ENCODE measurements at regions of chr2 and their contacts with region 1.

Region 1: DNA sequence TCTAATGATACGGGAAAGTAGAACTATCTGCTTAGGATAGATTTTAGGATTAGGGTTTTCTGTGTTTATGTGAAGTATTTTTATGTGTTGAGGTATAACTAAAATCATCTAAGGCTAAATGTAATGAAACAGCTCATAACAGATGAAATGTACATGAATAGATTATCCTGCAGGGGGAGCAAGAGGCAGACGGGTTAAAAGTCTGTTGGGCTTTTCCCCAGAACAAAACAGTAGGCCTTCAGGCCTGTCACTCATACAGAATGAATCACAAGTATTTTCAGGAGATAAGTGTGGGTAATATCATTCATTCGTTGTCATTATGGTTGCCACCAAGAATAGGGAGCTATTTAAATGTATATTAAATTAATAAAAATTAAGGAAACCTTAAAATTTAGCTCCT is 107.9 kb upstream of the IL1R2 start:
- DNase-seq: peak; percentile 76
- H3K4me3 Mint-ChIP-seq: no peak overlapping the region
- H3K27ac Mint-ChIP-seq: no peak overlapping the region
- H3K4me1 Mint-ChIP-seq: no peaks in the 10 kb centered on the region
- H3K27me3 Mint-ChIP-seq: no peaks in the 10 kb centered on the region
- CTCF ChIP-seq: peak; percentile 42

Region 2: DNA sequence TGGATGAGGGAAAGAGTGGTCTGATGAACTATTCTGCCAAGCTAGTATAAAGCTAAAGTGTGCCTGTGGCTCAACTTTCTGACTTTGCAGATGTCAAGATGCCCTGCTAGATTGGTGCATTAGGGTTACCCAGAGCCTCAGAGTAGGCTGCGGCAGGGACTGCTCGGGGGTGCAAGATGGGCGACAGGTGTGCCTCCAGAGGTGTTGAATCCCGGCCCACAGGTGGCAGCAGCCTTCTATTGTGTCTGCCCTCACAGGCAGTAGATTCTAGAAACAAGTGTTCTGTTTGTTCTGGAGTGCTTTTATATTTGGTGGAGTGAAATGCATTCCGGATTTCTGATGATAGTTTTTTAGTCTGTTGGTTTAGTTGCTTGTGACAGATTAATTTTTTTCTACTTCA is 23.7 kb before region 1 on chr2:
- CTCF ChIA-PET with region 1: interaction called, 11 read pairs
- POLR2A ChIA-PET with region 1: no interaction called
- intact Hi-C with region 1: no loop called
- DNase-seq: no peak
- H3K4me3 Mint-ChIP-seq: no peak overlapping the region
- H3K27ac Mint-ChIP-seq: no peak overlapping the region
- H3K4me1 Mint-ChIP-seq: peaks cover 14% of the 10 kb centered on the region
- H3K27me3 Mint-ChIP-seq: no peaks in the 10 kb centered on the region
- CTCF ChIP-seq: no peak

Region 3: DNA sequence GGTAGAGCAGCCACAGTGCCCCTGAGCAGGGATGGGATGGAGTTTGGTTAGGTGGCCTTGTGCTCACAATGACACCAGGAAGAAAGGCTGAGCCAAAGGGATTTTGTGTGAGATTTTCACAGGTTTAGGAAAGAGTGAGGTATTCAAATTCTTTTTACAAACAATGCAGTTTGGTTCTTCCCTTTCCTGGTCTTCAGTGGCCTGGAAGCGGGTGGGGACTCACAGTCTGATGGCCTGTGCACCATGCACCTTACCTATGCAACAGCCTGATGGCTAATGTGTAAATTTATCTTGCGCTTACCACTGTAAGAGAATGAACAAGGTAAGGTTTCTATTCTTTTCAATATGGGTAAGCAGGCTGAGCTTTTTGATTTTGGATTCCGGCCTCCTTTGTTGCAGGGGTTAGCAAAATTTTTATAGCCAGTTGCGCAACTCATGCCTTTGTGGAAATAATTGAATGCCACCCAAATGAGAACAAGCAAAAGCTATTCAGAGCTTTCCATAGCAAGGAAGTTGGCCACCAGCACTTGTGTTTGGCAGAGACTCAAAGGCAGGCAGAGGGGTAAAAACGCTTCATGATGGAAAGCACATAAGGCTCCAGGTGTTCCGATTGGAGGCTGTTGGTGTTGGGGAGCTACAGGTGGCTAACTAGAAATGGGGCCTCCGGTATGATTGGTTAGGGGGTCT is 84.1 kb after region 1 on chr2:
- CTCF ChIA-PET with region 1: interaction called, 30 read pairs
- POLR2A ChIA-PET with region 1: interaction called, 3 read pairs
- intact Hi-C with region 1: no loop called
- DNase-seq: peak; percentile 87
- H3K4me3 Mint-ChIP-seq: no peak overlapping the region
- H3K27ac Mint-ChIP-seq: no peak overlapping the region
- H3K4me1 Mint-ChIP-seq: peaks cover 40% of the 10 kb centered on the region
- H3K27me3 Mint-ChIP-seq: no peaks in the 10 kb centered on the region
- CTCF ChIP-seq: no peak

Region 4: DNA sequence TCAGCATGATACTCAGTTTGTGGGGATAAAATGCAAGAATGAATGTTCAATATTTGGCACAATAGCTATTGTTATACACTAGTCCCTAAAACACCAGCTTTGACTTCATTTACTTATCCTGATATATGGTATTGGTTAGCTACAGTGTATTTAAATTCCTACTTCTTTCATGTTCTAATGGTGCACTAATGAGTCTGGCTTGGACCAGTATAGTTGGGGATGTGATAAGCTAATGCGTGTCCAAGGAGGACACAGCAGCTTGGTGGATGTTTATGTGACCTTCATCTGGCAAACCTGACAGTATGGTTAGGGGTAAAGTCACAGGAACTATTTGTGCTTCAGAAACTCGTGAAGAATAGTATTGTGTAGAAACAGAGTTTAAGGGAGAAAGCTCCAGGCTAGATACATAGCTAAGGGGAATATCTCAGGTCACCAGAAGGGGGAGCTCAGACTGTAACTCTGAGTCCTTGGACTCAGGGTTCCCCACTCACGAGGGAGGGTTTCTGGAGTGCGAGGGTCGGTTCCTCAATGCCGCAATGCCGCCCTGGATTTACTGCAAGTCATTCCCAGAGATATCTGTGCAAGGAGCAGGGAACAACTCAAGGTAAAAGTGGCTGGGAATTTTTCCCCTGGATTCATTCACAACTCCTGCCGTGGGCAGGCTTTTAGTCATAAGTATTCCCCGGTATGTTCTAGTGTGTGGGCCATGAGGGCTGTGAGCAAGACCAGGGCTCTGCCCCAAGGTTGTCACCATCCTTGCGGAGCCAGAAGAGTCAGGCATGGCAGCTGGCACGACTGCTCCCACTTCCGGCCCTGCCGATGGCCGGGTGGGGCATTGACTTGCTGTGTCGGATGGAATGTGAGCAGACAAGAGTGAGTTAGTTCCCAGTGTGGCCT is 122.4 kb after region 1 on chr2:
- CTCF ChIA-PET with region 1: interaction called, 19 read pairs
- POLR2A ChIA-PET with region 1: interaction called, 4 read pairs
- intact Hi-C with region 1: no loop called
- DNase-seq: peak; percentile 71
- H3K4me3 Mint-ChIP-seq: no peak overlapping the region
- H3K27ac Mint-ChIP-seq: no peak overlapping the region
- H3K4me1 Mint-ChIP-seq: no peaks in the 10 kb centered on the region
- H3K27me3 Mint-ChIP-seq: no peaks in the 10 kb centered on the region
- CTCF ChIP-seq: peak; percentile 56

Region 5: DNA sequence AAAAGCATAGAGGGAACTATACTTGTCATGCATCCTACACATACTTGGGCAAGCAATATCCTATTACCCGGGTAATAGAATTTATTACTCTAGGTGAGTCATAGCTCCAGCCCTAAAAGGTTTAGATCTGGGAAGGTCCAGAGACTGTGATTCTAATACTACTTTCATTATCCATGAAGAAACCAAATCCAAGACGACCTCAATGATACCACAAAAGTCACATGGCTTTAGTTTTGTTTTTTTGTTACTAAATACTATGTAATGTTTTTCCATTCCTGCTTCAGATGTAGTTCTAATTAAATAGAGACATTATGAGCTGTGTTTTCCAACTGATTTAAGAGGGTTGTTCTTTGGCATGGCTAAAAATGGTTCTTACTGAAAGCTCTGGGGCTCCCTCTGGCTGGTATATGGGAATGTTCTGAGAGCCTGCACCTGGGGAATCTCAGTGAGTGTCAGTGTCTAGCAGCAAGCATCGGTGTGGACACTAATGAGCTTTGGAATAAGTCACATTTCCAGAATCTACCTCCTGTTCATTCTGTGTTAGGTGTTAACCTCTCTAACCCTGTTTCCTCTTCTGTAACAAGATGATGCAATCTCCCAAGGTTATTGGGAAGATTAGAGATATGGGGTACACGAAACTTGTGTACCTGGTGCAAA is 282.5 kb after region 1 on chr2:
- CTCF ChIA-PET with region 1: interaction called, 25 read pairs
- POLR2A ChIA-PET with region 1: interaction called, 4 read pairs
- intact Hi-C with region 1: loop called (anchors 1 kb)
- DNase-seq: peak; percentile 68
- H3K4me3 Mint-ChIP-seq: no peak overlapping the region
- H3K27ac Mint-ChIP-seq: no peak overlapping the region
- H3K4me1 Mint-ChIP-seq: peaks cover 9% of the 10 kb centered on the region
- H3K27me3 Mint-ChIP-seq: no peaks in the 10 kb centered on the region
- CTCF ChIP-seq: peak; percentile 56

Region 6: GRCh38 chr2:102449370-102449974 is 565.6 kb after region 1 on chr2:
- CTCF ChIA-PET with region 1: interaction called, 28 read pairs
- POLR2A ChIA-PET with region 1: interaction called, 5 read pairs
- intact Hi-C with region 1: loop called (anchors 1 kb)
- DNase-seq: peak; percentile 49
- H3K4me3 Mint-ChIP-seq: no peak overlapping the region
- H3K27ac Mint-ChIP-seq: no peak overlapping the region
- H3K4me1 Mint-ChIP-seq: no peaks in the 10 kb centered on the region
- H3K27me3 Mint-ChIP-seq: no peaks in the 10 kb centered on the region
- CTCF ChIP-seq: peak; percentile 64

Measured in MCF 10A (cell line).